Caco-2 (cell line): ENCODE measurements at regions of chr5 and their contacts with region 1.

Region 1: DNA sequence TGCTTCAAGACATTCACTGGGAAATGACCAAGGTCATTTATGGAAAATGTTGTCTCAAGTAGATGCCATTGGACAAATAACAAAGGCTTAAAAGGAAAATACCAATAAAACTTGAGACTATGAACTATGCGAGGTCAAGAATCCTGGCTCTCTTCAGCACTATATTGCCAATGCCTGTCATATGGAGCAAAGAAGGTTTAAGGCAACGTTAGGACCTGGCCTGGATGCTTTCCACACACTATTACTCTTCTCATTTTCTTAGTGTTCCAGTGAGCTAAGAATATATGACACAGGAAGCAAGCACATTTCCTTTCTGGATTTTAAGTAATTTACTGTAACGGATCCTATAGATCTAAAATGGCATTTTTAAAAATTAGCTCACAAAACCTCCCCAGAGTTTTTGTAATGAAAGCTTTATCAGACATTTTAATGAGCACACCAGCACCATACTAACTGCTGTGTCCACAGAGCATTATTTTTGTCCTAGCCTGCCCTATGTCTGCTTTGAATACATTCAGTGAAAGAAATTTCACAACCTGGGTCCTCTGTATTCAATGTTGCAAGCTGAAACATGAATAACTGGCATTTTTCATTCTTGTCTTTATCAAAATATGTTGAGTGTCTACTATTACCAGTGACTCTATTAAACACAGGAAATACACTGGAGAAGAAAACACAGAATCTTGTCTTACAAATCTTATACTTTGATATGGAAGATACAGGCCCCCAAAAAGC is 315.6 kb downstream of the CETN3 start:
- DNase-seq: no peak
- H3K4me3 ChIP-seq: no peak overlapping the region
- H3K4me3 Mint-ChIP-seq: no peak overlapping the region
- H3K27ac Mint-ChIP-seq: no peak overlapping the region
- H3K4me1 ChIP-seq: peaks cover 36% of the 10 kb centered on the region
- H3K4me1 Mint-ChIP-seq: peaks cover 42% of the 10 kb centered on the region
- H3K27me3 ChIP-seq: no peaks in the 10 kb centered on the region
- H3K27me3 Mint-ChIP-seq: no peaks in the 10 kb centered on the region
- CTCF ChIP-seq: no peak

Region 2: DNA sequence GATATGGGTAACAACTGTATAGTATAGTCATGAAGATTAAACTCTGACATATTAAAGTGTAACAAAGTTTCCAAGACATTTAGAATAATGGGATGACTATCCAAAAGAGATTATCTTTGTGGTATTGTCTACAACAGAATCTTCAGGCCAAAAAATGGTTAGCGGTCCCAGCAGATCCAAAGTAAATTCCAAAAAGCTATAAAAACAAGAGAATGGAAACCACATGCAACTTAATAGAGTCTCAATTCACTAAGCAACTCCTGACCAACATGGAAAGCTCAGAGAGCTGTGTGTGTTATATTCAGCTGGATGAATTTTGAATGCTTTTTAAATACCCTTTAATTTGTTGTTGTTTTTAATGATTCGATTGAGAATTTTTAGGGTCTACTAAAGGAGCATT is 372.6 kb before region 1 on chr5:
- CTCF ChIA-PET with region 1: no interaction called
- POLR2A ChIA-PET with region 1: no interaction called
- intact Hi-C with region 1: loop called (anchors 5 kb)
- DNase-seq: no peak
- H3K4me3 ChIP-seq: no peak overlapping the region
- H3K4me3 Mint-ChIP-seq: no peak overlapping the region
- H3K27ac Mint-ChIP-seq: no peak overlapping the region
- H3K4me1 ChIP-seq: no peaks in the 10 kb centered on the region
- H3K4me1 Mint-ChIP-seq: no peaks in the 10 kb centered on the region
- H3K27me3 ChIP-seq: no peaks in the 10 kb centered on the region
- H3K27me3 Mint-ChIP-seq: peaks cover 3% of the 10 kb centered on the region
- CTCF ChIP-seq: no peak

Region 3: GRCh38 chr5:90109290-90109689 is 15.4 kb after region 1 on chr5:
- CTCF ChIA-PET with region 1: no interaction called
- POLR2A ChIA-PET with region 1: no interaction called
- intact Hi-C with region 1: no loop called
- DNase-seq: no peak
- H3K4me3 ChIP-seq: no peak overlapping the region
- H3K4me3 Mint-ChIP-seq: no peak overlapping the region
- H3K27ac Mint-ChIP-seq: no peak overlapping the region
- H3K4me1 ChIP-seq: no peaks in the 10 kb centered on the region
- H3K4me1 Mint-ChIP-seq: no peaks in the 10 kb centered on the region
- H3K27me3 ChIP-seq: no peaks in the 10 kb centered on the region
- H3K27me3 Mint-ChIP-seq: no peaks in the 10 kb centered on the region
- CTCF ChIP-seq: no peak

Region 4: GRCh38 chr5:90119531-90120006 is 25.7 kb after region 1 on chr5:
- CTCF ChIA-PET with region 1: no interaction called
- POLR2A ChIA-PET with region 1: no interaction called
- intact Hi-C with region 1: loop called (anchors 2 kb)
- DNase-seq: peak in 1 of 2 experiments; percentile 30
- H3K4me3 ChIP-seq: no peak overlapping the region
- H3K4me3 Mint-ChIP-seq: no peak overlapping the region
- H3K27ac Mint-ChIP-seq: no peak overlapping the region
- H3K4me1 ChIP-seq: peaks cover 13% of the 10 kb centered on the region
- H3K4me1 Mint-ChIP-seq: peaks cover 5% of the 10 kb centered on the region
- H3K27me3 ChIP-seq: no peaks in the 10 kb centered on the region
- H3K27me3 Mint-ChIP-seq: no peaks in the 10 kb centered on the region
- CTCF ChIP-seq: no peak